BJ (cell line): ENCODE measurements at regions of chr20 and their contacts with region 1.

Region 1: GRCh38 chr20:3786665-3787323 is at the start of gene CENPB:
- DNase-seq: no peak
- H3K4me3 ChIP-seq: peak within 1 kb of the TSS; percentile 71
- H3K27me3 ChIP-seq: no peaks in the 10 kb centered on the region
- CTCF ChIP-seq: peak; percentile 45
- polyA plus RNA-seq, gene CENPB: 31.0 and 47.5 TPM in 2 replicates

Region 2: GRCh38 chr20:3767427-3768341 is 19.1 kb before region 1 on chr20 and contains the start of gene ADISSP:
- CTCF ChIA-PET with region 1: interaction called, 14 read pairs
- POLR2A ChIA-PET with region 1: interaction called, 3 read pairs
- DNase-seq: peak; percentile 85
- H3K4me3 ChIP-seq: peak within 1 kb of the TSS; percentile 73
- H3K27me3 ChIP-seq: no peaks in the 10 kb centered on the region
- CTCF ChIP-seq: peak; percentile 30
- polyA plus RNA-seq, gene ADISSP: 21.3 and 34.3 TPM in 2 replicates

Region 3: DNA sequence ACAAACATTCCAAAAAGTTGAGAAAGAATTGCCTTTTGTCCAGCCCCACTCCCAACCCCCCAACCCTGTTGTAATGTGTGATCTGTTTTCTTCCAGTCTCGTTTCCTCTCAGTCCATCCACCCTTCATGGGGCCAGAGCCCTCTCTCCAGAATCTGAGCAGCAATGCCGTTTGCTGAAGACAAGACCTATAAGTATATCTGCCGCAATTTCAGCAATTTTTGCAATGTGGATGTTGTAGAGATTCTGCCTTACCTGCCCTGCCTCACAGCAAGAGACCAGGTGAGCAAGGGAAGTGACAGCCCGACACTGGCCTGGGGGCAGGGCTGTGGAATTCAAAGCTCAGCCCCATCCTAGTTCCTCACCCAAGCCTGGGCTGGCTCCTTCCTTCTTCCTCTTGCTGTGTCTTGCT is 67.7 kb after region 1 on chr20:
- CTCF ChIA-PET with region 1: interaction called, 21 read pairs
- POLR2A ChIA-PET with region 1: no interaction called
- DNase-seq: no peak
- H3K4me3 ChIP-seq: no peak overlapping the region
- H3K27me3 ChIP-seq: no peaks in the 10 kb centered on the region
- CTCF ChIP-seq: no peak